ENCODE measurements at regions of chr14 and their contacts with region 1.

Region 1: GRCh38 chr14:23877538-23878180 is 75.9 kb upstream of the DHRS4 start:
- DNase-seq: no peak
- H3K4me3 ChIP-seq: no peak overlapping the region
- H3K27ac ChIP-seq: no peak overlapping the region
- H3K4me1 ChIP-seq: no peaks in the 10 kb centered on the region
- H3K27me3 ChIP-seq: no peaks in the 10 kb centered on the region
- CTCF ChIP-seq: no peak
- POLR2A ChIP-seq: no peak

Region 2: GRCh38 chr14:23793532-23793931 is 84.1 kb before region 1 on chr14:
- intact Hi-C with region 1: loop called (anchors 2 kb)
- DNase-seq: no peak
- H3K4me3 ChIP-seq: no peak overlapping the region
- H3K27ac ChIP-seq: no peak overlapping the region
- H3K4me1 ChIP-seq: no peaks in the 10 kb centered on the region
- H3K27me3 ChIP-seq: no peaks in the 10 kb centered on the region
- CTCF ChIP-seq: no peak
- POLR2A ChIP-seq: no peak

Region 3: GRCh38 chr14:24761141-24761540 is 883.5 kb after region 1 on chr14:
- intact Hi-C with region 1: no loop called
- DNase-seq: no peak
- H3K4me3 ChIP-seq: no peak overlapping the region
- H3K27ac ChIP-seq: no peak overlapping the region
- H3K4me1 ChIP-seq: no peaks in the 10 kb centered on the region
- H3K27me3 ChIP-seq: no peaks in the 10 kb centered on the region
- CTCF ChIP-seq: no peak
- POLR2A ChIP-seq: no peak